Pancreas (tissue), 10 donors: ENCODE measurements at regions of chr15 and their contacts with region 1.

Region 1: GRCh38 chr15:22838292-22839042 is at the start of gene NIPA2:
- DNase-seq: peak; percentile 97 to 100 (median 100)
- ATAC-seq: peak; percentile 95 to 99 (median 96)
- H3K4me3 ChIP-seq: peak within 1 kb of the TSS; percentile 77 to 91 (median 80)
- H3K27ac ChIP-seq: peak within 1 kb of the TSS; percentile 90 to 98 (median 96)
- H3K4me1 ChIP-seq: peaks cover 0 to 11% (median 0%) of the 10 kb centered on the region in 3 donors
- H3K27me3 ChIP-seq: no peaks in the 10 kb centered on the region
- CTCF ChIP-seq: no peak
- total RNA-seq, gene NIPA2: 14.3 to 24.9 (median 18.2) TPM

Region 2: GRCh38 chr15:22786868-22787698 is 51.4 kb before region 1 on chr15:
- intact Hi-C with region 1: loop called in 1 of 3 experiments (anchors 10 kb)
- DNase-seq: peak; percentile 16 to 84 (median 40)
- ATAC-seq: peak; percentile 33 to 58 (median 44)
- H3K4me3 ChIP-seq: peak overlapping the region; percentile 50 to 79 (median 58)
- H3K27ac ChIP-seq: peak overlapping the region; percentile 53 to 94 (median 78)
- H3K4me1 ChIP-seq: no peaks in the 10 kb centered on the region
- H3K27me3 ChIP-seq: no peaks in the 10 kb centered on the region
- CTCF ChIP-seq: no peak

Region 3: GRCh38 chr15:22811640-22812039 is 26.8 kb before region 1 on chr15:
- intact Hi-C with region 1: loop called in 1 of 3 experiments (anchors 2 kb)
- DNase-seq: peak in 5 of 6 donors; percentile 40 to 75 (median 69)
- ATAC-seq: peak; percentile 84 to 94 (median 90)
- H3K4me3 ChIP-seq: no peak overlapping the region
- H3K27ac ChIP-seq: no peak overlapping the region
- H3K4me1 ChIP-seq: peaks cover 6 to 10% (median 7%) of the 10 kb centered on the region in 3 donors
- H3K27me3 ChIP-seq: no peaks in the 10 kb centered on the region
- CTCF ChIP-seq: peak in 2 of 4 donors; percentile 26 to 41